IMR-90 (cell line): ENCODE measurements at regions of chr1 and their contacts with region 1.

Region 1: DNA sequence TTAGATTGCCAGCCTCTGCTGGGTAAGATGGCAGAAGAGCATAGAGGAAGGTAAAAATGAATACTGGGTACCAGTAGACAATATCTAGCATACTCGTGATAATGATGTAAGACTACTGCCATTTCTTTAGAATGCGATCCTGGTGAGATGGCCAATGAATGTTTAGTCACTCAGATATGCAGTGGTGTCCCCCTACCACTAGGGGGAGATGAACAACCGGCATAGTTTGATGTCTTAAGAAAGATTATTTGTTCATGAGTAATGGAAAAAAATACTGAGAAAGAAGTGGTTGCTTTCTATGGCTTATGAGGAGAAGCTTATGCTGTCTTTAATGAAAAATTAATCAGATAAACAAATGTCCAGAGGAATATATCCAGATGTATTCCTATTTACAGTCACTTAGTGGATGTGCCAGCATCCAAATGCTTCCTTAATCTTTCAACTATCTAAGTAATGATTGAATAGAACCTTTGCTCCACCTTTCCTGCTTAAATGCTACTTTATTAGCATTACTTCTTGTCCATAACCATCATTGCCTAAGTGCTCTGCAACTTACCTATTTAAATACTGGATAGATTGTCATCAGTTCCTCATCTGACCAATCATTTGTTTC is 256.6 kb downstream of the ST6GALNAC3 start:
- DNase-seq: peak; percentile 77
- ATAC-seq: peak; percentile 96
- H3K4me3 ChIP-seq: no peak overlapping the region
- H3K27ac ChIP-seq: no peak overlapping the region
- H3K4me1 ChIP-seq: no peaks in the 10 kb centered on the region
- H3K27me3 ChIP-seq: no peaks in the 10 kb centered on the region
- CTCF ChIP-seq: peak; percentile 89
- POLR2A ChIP-seq: no peak
- RAD21 ChIP-seq: peak; percentile 85

Region 2: GRCh38 chr1:75745276-75745675 is 585.8 kb before region 1 on chr1:
- CTCF ChIA-PET with region 1: no interaction called
- POLR2A ChIA-PET with region 1: no interaction called
- dilution Hi-C with region 1: no loop called
- in situ Hi-C with region 1: no loop called
- intact Hi-C with region 1: no loop called
- DNase-seq: no peak
- ATAC-seq: no peak
- H3K4me3 ChIP-seq: no peak overlapping the region
- H3K27ac ChIP-seq: no peak overlapping the region
- H3K4me1 ChIP-seq: no peaks in the 10 kb centered on the region
- H3K27me3 ChIP-seq: no peaks in the 10 kb centered on the region
- CTCF ChIP-seq: no peak
- POLR2A ChIP-seq: no peak
- RAD21 ChIP-seq: no peak

Region 3: DNA sequence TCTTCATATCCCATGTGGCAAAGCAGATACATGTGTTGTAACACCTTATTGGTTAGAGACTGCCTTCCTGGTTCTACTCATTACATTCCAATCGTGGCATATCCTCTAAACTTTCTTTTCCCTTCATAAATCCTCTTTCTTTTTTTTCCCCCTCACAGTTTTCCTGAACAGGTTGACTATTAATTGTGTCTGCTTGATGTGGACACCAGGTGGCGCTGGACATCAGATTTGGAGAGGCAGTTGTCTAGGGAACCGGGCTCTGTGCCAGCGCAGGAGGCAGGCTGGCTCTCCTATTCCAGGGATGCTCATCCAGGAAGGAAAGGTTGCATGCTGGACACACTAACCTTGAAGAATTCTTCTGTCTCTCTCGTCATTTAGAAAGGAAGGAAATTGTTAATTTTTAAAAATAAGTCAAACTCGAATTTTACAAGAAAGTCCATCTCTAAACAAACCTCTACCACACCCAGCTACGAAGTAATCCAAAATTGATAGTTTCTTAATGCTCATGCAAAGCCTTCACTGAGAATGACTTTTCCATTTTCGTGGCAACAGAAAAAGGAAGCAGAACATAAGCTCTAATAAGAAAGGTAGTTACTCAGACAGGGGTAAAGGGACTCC is 339.5 kb before region 1 on chr1:
- CTCF ChIA-PET with region 1: no interaction called
- POLR2A ChIA-PET with region 1: no interaction called
- dilution Hi-C with region 1: no loop called
- in situ Hi-C with region 1: no loop called
- intact Hi-C with region 1: loop called (anchors 5 kb)
- DNase-seq: peak; percentile 83
- ATAC-seq: peak; percentile 73
- H3K4me3 ChIP-seq: no peak overlapping the region
- H3K27ac ChIP-seq: no peak overlapping the region
- H3K4me1 ChIP-seq: no peaks in the 10 kb centered on the region
- H3K27me3 ChIP-seq: peaks cover 2% of the 10 kb centered on the region; the same call in 1 of the 2 replicates
- CTCF ChIP-seq: peak; percentile 83
- POLR2A ChIP-seq: no peak
- RAD21 ChIP-seq: peak; percentile 67

Region 4: DNA sequence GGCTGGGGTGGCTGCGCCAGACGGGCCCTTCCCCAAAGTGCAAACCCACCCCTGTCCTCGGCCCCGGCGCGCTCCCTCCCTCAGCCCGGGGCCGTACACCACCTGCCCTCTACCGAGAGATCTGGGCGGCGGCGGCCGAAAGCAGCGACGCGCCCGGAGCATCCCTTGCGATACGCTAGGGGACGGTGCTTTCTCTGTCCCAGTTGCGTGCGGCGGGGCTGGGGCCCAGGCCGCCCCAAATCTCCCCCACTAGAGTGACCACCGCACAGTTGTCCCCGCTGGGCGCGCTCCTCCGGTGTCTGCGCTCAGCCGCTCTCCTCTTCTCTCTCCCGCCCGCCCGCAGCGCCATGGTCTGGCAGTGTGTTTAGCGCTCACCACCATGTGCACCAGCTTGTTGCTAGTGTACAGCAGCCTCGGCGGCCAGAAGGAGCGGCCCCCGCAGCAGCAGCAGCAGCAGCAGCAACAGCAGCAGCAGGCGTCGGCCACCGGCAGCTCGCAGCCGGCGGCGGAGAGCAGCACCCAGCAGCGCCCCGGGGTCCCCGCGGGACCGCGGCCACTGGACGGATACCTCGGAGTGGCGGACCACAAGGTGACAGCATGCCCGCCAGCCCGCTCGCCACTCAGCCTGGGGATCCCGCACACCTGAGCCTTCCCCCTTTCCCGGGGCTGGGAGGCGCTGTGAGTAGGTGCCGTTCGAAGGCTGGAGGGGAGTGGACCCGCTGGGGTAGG is 537.2 kb after region 1 on chr1:
- CTCF ChIA-PET with region 1: no interaction called
- POLR2A ChIA-PET with region 1: no interaction called
- dilution Hi-C with region 1: no loop called
- in situ Hi-C with region 1: no loop called
- intact Hi-C with region 1: loop called (anchors 5 kb)
- DNase-seq: peak; percentile 29
- ATAC-seq: peak; percentile 81
- H3K4me3 ChIP-seq: peak overlapping the region; percentile 57
- H3K27ac ChIP-seq: no peak overlapping the region
- H3K4me1 ChIP-seq: 0 out of 2 replicates have a peak, but pooled peaks cover 2% of the 10 kb centered on the region
- H3K27me3 ChIP-seq: peaks cover 26% of the 10 kb centered on the region
- CTCF ChIP-seq: no peak; the same call in 1 of the 2 replicates
- POLR2A ChIP-seq: no peak
- RAD21 ChIP-seq: no peak

Region 5: DNA sequence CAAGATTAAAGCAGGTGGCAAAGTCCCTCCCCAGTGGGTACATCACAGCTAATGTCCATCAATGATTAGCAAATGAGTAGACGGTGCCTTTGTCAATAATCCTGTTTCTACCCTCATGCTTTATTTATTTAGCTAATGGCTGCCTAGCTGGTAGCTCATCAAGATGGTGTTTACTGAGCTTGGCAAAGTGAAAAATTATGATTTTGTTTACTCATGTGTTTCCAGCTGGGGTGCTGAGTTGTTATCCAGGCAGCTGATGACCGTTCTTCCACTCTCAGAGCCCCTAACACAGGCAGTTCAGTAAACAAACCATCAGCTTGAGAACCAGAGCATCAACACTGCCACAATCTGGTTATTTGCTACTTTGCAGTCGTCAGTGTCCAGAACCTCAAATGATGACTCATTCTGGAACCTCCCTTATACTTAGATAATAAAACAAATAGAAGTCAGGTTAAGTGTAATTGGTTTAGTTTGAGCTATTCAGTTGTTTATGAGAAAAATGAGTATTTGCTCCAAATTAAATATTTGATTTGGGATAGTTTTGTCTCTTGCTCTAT is 700.1 kb after region 1 on chr1:
- CTCF ChIA-PET with region 1: no interaction called
- POLR2A ChIA-PET with region 1: no interaction called
- dilution Hi-C with region 1: no loop called
- in situ Hi-C with region 1: no loop called
- intact Hi-C with region 1: loop called (anchors 10 kb)
- DNase-seq: peak; percentile 73
- ATAC-seq: peak; percentile 85
- H3K4me3 ChIP-seq: no peak overlapping the region
- H3K27ac ChIP-seq: no peak overlapping the region
- H3K4me1 ChIP-seq: no peaks in the 10 kb centered on the region
- H3K27me3 ChIP-seq: peaks cover 25% of the 10 kb centered on the region
- CTCF ChIP-seq: 0 out of 2 replicates have a peak, but pooled peaks have one; percentile 6
- POLR2A ChIP-seq: no peak
- RAD21 ChIP-seq: no peak

Region 6: GRCh38 chr1:77143529-77144121 is 812.5 kb after region 1 on chr1:
- CTCF ChIA-PET with region 1: no interaction called
- POLR2A ChIA-PET with region 1: no interaction called
- dilution Hi-C with region 1: no loop called
- in situ Hi-C with region 1: loop called (anchors 10 kb)
- intact Hi-C with region 1: no loop called
- DNase-seq: peak; percentile 1
- ATAC-seq: no peak
- H3K4me3 ChIP-seq: no peak overlapping the region
- H3K27ac ChIP-seq: no peak overlapping the region
- H3K4me1 ChIP-seq: no peaks in the 10 kb centered on the region
- H3K27me3 ChIP-seq: no peaks in the 10 kb centered on the region
- CTCF ChIP-seq: peak; percentile 45
- POLR2A ChIP-seq: no peak
- RAD21 ChIP-seq: peak; percentile 43